RWPE1 (cell line): ENCODE measurements at regions of chr4 and their contacts with region 1.

Region 1: DNA sequence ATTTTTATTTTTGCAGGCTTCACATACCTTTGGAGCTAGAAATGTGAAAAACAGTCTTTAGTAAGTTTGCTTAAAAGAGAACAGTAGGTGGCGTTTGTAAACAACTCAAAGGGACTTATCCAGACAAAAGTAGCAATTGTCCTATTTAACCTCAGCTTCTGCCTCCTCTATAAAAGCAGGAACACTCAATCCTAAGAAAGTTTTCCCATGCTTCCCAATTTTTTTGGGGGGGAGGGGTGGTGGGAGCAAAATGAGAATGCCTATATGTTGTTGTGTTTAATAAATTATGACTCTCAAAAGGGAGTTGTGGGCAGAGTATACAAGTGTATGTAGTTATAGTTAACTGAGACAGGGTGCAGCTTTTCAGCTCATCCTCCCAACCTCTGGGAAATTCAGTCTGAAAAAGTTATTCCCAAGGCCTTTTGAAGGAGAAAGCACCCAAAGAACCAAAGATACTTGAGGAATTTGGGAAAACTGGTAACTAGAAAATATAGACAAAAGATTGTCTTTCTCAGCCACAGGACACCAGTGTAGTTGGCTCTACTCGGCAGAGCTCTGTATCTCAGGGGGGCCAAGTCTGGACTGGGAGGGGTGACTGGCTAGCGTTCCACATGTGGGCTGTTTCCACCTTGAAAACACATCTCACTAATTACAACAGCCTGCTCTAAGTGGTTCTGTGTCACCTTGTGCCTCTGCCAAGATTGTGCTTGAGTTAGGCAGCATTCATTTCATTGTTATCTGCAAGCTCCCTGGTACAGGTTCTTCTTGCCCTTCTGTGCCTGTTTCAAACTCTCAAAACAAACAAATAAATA is 2.8 kb downstream of the SFRP2 start:
- DNase-seq: peak; percentile 38
- H3K27ac ChIP-seq: no peak overlapping the region
- CTCF ChIP-seq: peak; percentile 65

Region 2: GRCh38 chr4:154526151-154526550 is 740.0 kb after region 1 on chr4:
- CTCF ChIA-PET with region 1: interaction called, 13 read pairs
- POLR2A ChIA-PET with region 1: no interaction called
- DNase-seq: no peak
- H3K27ac ChIP-seq: no peak overlapping the region
- CTCF ChIP-seq: no peak